Activated CD4-positive, alpha-beta memory T cell treated with anti-CD3 and anti-CD28 coated beads, Interleukin-2, amount 10 ng/mL, durations not matched to agents 7 days and 5 days (primary cell): ENCODE measurements at regions of chr12 and their contacts with region 1.

Region 1: DNA sequence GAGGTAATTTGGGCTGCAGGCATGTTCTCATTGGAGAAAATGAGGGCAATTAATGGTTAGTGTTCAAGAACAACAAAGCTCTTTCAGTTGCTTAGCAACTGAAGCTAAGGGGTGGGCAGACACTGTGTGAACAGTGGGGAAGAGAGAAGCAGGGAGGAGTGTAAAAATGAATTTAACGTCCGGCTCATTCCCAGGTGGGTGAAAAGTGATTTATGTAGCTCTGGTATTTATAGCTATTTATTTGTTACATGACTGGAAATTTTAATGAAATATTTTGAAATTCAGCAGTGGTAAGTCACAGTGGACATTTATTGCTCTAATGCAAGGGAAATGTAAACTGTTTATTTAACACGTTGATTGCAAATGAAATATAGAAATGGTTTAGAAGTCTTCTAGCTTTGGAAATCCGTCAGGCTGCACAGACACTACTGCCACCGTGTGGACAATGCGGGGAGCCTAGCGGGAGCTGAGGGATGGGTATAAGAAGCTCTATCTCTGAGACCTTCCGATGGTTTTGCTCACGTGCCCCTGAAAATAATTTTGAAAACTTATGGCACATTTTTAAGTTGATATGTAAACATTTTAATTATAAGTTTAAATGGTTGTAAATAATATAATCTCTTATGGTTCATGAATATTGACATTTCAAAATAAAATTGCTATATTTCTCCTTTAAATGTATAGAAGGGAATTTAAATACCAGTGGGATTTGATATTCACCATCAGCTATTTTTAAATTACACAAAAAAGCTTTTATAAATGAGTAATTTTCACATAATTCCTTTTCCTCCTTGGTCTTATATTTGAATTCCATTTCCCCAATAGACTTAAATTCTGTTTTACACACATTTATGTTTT is 54.4 kb downstream of the E2F7 start:
- DNase-seq: peak; percentile 71
- H3K4me3 Mint-ChIP-seq: no peak overlapping the region
- H3K27ac Mint-ChIP-seq: no peak overlapping the region
- H3K4me1 Mint-ChIP-seq: peaks cover 2% of the 10 kb centered on the region
- H3K27me3 Mint-ChIP-seq: peaks cover 20% of the 10 kb centered on the region

Region 2: GRCh38 chr12:76621582-76622024 is 389.3 kb before region 1 on chr12:
- CTCF ChIA-PET with region 1: interaction called, 45 read pairs
- POLR2A ChIA-PET with region 1: no interaction called
- DNase-seq: peak; percentile 69
- H3K4me3 Mint-ChIP-seq: no peak overlapping the region
- H3K27ac Mint-ChIP-seq: no peak overlapping the region
- H3K4me1 Mint-ChIP-seq: peaks cover 5% of the 10 kb centered on the region
- H3K27me3 Mint-ChIP-seq: peaks cover 6% of the 10 kb centered on the region

Region 3: GRCh38 chr12:77023501-77023900 is 12.6 kb after region 1 on chr12:
- CTCF ChIA-PET with region 1: interaction called, 36 read pairs
- POLR2A ChIA-PET with region 1: no interaction called
- DNase-seq: no peak
- H3K4me3 Mint-ChIP-seq: no peak overlapping the region
- H3K27ac Mint-ChIP-seq: no peak overlapping the region
- H3K4me1 Mint-ChIP-seq: no peaks in the 10 kb centered on the region
- H3K27me3 Mint-ChIP-seq: no peaks in the 10 kb centered on the region

Region 4: DNA sequence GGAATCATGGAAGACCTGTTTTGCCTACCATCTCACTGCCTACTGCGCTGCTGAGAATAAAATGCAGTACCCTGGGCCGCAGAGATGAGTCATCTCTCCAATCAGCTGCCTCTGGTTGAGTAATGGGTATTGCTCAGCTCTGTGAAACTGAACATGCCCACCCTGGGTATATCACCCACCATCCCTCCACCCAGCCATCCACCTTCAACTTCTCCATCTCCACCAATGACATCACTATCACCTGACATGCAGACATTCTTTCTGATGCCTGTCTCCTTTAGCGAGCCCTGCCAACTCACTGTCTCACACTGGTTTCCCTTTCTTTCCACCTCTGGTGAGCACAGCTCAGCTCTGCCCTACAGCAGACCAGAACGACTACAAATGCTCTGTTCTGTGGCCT is 20.8 kb after region 1 on chr12:
- CTCF ChIA-PET with region 1: interaction called, 14 read pairs
- POLR2A ChIA-PET with region 1: no interaction called
- DNase-seq: no peak
- H3K4me3 Mint-ChIP-seq: no peak overlapping the region
- H3K27ac Mint-ChIP-seq: no peak overlapping the region
- H3K4me1 Mint-ChIP-seq: peaks cover 10% of the 10 kb centered on the region
- H3K27me3 Mint-ChIP-seq: no peaks in the 10 kb centered on the region

Region 5: GRCh38 chr12:77166696-77167095 is 155.8 kb after region 1 on chr12:
- CTCF ChIA-PET with region 1: no interaction called
- POLR2A ChIA-PET with region 1: no interaction called
- DNase-seq: no peak
- H3K4me3 Mint-ChIP-seq: no peak overlapping the region
- H3K27ac Mint-ChIP-seq: no peak overlapping the region
- H3K4me1 Mint-ChIP-seq: no peaks in the 10 kb centered on the region
- H3K27me3 Mint-ChIP-seq: no peaks in the 10 kb centered on the region